ENCODE measurements at regions of chr15 and their contacts with region 1.

Region 1: DNA sequence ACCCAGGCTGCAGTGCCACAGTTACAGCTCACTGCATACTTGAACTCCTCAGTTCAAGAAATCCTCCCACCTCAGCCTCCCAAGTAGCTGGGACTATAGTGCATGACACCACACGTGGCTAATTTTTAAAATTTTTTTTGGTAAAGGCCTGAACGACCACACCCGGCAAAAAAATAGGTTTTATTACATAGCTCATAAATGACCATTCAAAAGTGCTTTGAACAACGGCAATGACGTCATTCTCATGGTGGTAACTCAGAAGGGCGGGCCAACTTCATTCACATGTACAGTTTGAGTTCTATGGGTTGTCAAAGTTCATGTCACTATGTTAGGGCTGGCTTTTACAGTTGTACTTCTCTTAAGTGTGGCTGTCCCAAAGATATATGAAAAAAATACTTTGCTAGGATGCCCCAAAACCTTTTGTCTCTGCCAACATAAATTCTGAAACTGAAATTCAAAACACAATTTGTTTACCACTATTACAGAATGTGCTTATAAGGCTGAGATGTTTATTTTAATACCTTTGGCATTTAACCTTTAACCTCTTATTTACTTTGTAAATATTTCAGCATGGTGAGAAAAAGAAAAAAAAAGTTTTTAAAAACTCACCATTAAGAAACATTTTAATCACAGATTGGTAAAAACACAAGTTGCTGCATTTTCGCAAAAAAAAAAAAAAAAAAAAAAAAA is 6.2 kb downstream of the MYO1E start:
- DNase-seq: no peak
- H3K4me3 ChIP-seq: no peak overlapping the region
- H3K27ac ChIP-seq: no peak overlapping the region
- H3K4me1 ChIP-seq: peaks cover 0 to 8% of the 10 kb centered on the region in 2 donors
- H3K27me3 ChIP-seq: no peaks in the 10 kb centered on the region
- CTCF ChIP-seq: no peak

Region 2: GRCh38 chr15:59247364-59247763 is 119.1 kb before region 1 on chr15:
- intact Hi-C with region 1: loop called (anchors 5 kb)
- DNase-seq: peak in 1 of 2 donors; percentile 75
- H3K4me3 ChIP-seq: no peak overlapping the region
- H3K27ac ChIP-seq: no peak overlapping the region
- H3K4me1 ChIP-seq: no peaks in the 10 kb centered on the region
- H3K27me3 ChIP-seq: no peaks in the 10 kb centered on the region
- CTCF ChIP-seq: peak; percentile 41 to 45 (median 45)

Measured in ascending aorta (tissue), 2 donors.